CD14-positive monocyte (primary cell): ENCODE measurements at regions of chr10 and their contacts with region 1.

Region 1: GRCh38 chr10:17023386-17024298 is 106.0 kb downstream of the CUBN start:
- DNase-seq: peak; percentile 95 to 99 (median 98)
- H3K4me3 ChIP-seq: peak overlapping the region in 1 of 3 experiments; percentile 41
- H3K4me3 Mint-ChIP-seq: peak overlapping the region; percentile 25 to 79
- H3K27ac ChIP-seq: peak overlapping the region; percentile 87 to 97
- H3K27ac Mint-ChIP-seq: peak overlapping the region; percentile 96 to 99 (median 98)
- H3K4me1 ChIP-seq: peaks cover 59 to 68% of the 10 kb centered on the region in 2 donors
- H3K4me1 Mint-ChIP-seq: peaks cover 58% of the 10 kb centered on the region
- H3K27me3 ChIP-seq: no peaks in the 10 kb centered on the region
- H3K27me3 Mint-ChIP-seq: peaks cover 0 to 2% (median 0%) of the 10 kb centered on the region in 3 donors
- CTCF ChIP-seq: no peak

Region 2: GRCh38 chr10:16915300-16915699 is 108.3 kb before region 1 on chr10:
- intact Hi-C with region 1: loop called in 1 of 2 experiments (anchors 10 kb)
- DNase-seq: peak; percentile 13 to 49 (median 29)
- H3K4me3 ChIP-seq: no peak overlapping the region
- H3K4me3 Mint-ChIP-seq: no peak overlapping the region
- H3K27ac ChIP-seq: no peak overlapping the region
- H3K27ac Mint-ChIP-seq: peak overlapping the region in 2 of 7 donors; percentile 5 to 33
- H3K4me1 ChIP-seq: peaks cover 10 to 11% of the 10 kb centered on the region in 2 donors
- H3K4me1 Mint-ChIP-seq: peaks cover 14% of the 10 kb centered on the region
- H3K27me3 ChIP-seq: no peaks in the 10 kb centered on the region
- H3K27me3 Mint-ChIP-seq: peaks cover 0 to 2% (median 0%) of the 10 kb centered on the region in 3 donors
- CTCF ChIP-seq: no peak

Region 3: GRCh38 chr10:16965740-16966447 is 57.7 kb before region 1 on chr10:
- intact Hi-C with region 1: loop called in 1 of 2 experiments (anchors 5 kb)
- DNase-seq: no peak
- H3K4me3 ChIP-seq: no peak overlapping the region
- H3K4me3 Mint-ChIP-seq: peak overlapping the region in 1 of 2 donors; percentile 59
- H3K27ac ChIP-seq: no peak overlapping the region
- H3K27ac Mint-ChIP-seq: peak overlapping the region in 4 of 7 donors; percentile 69 to 85 (median 78)
- H3K4me1 ChIP-seq: peaks cover 29% of the 10 kb centered on the region in 2 donors
- H3K4me1 Mint-ChIP-seq: peaks cover 28% of the 10 kb centered on the region
- H3K27me3 ChIP-seq: peaks cover 22 to 29% of the 10 kb centered on the region in 2 donors
- H3K27me3 Mint-ChIP-seq: peaks cover 18 to 37% (median 33%) of the 10 kb centered on the region in 3 donors
- CTCF ChIP-seq: no peak

Region 4: GRCh38 chr10:17075533-17076359 is 52.1 kb after region 1 on chr10:
- intact Hi-C with region 1: loop called in 1 of 2 experiments (anchors 2 kb)
- DNase-seq: peak; percentile 83 to 96 (median 93)
- H3K4me3 ChIP-seq: no peak overlapping the region
- H3K4me3 Mint-ChIP-seq: peak overlapping the region in 1 of 2 donors; percentile 35
- H3K27ac ChIP-seq: peak overlapping the region; percentile 72 to 88
- H3K27ac Mint-ChIP-seq: peak overlapping the region; percentile 91 to 99 (median 97)
- H3K4me1 ChIP-seq: peaks cover 20 to 32% of the 10 kb centered on the region in 2 donors
- H3K4me1 Mint-ChIP-seq: peaks cover 44% of the 10 kb centered on the region
- H3K27me3 ChIP-seq: no peaks in the 10 kb centered on the region
- H3K27me3 Mint-ChIP-seq: peaks cover 0 to 6% (median 2%) of the 10 kb centered on the region in 3 donors
- CTCF ChIP-seq: no peak

Region 5: DNA sequence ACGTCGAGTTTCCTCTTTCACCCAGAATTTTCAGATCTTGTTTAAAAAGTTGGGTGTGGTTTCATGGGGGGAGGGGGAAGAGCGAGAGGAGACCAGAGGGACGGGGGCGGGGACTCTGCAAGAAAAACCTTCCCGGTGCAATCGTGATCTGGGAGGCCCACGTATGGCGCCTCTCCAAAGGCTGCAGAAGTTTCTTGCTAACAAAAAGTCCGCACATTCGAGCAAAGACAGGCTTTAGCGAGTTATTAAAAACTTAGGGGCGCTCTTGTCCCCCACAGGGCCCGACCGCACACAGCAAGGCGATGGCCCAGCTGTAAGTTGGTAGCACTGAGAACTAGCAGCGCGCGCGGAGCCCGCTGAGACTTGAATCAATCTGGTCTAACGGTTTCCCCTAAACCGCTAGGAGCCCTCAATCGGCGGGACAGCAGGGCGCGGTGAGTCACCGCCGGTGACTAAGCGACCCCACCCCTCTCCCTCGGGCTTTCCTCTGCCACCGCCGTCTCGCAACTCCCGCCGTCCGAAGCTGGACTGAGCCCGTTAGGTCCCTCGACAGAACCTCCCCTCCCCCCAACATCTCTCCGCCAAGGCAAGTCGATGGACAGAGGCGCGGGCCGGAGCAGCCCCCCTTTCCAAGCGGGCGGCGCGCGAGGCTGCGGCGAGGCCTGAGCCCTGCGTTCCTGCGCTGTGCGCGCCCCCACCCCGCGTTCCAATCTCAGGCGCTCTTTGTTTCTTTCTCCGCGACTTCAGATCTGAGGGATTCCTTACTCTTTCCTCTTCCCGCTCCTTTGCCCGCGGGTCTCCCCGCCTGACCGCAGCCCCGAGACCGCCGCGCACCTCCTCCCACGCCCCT is 204.7 kb after region 1 on chr10 and contains the start of gene VIM:
- intact Hi-C with region 1: loop called (anchors 2 kb)
- DNase-seq: peak; percentile 98 to 100 (median 98)
- H3K4me3 ChIP-seq: peak within 1 kb of the TSS; percentile 77 to 100 (median 97)
- H3K4me3 Mint-ChIP-seq: peak within 1 kb of the TSS; percentile 96 to 99
- H3K27ac ChIP-seq: peak within 1 kb of the TSS; percentile 98 to 100
- H3K27ac Mint-ChIP-seq: peak within 1 kb of the TSS; percentile 99 to 100 (median 99)
- H3K4me1 ChIP-seq: peaks cover 40 to 54% of the 10 kb centered on the region in 2 donors
- H3K4me1 Mint-ChIP-seq: peaks cover 47% of the 10 kb centered on the region
- H3K27me3 ChIP-seq: no peaks in the 10 kb centered on the region
- H3K27me3 Mint-ChIP-seq: peaks cover 0 to 16% (median 2%) of the 10 kb centered on the region in 3 donors
- CTCF ChIP-seq: no peak
- polyA plus RNA-seq, gene VIM: 697 to 4,055 (median 932) TPM

Region 6: GRCh38 chr10:17435187-17435586 is 411.5 kb after region 1 on chr10:
- intact Hi-C with region 1: no loop called
- DNase-seq: no peak
- H3K4me3 ChIP-seq: no peak overlapping the region
- H3K4me3 Mint-ChIP-seq: no peak overlapping the region
- H3K27ac ChIP-seq: no peak overlapping the region
- H3K27ac Mint-ChIP-seq: no peak overlapping the region
- H3K4me1 ChIP-seq: peaks cover 8 to 17% of the 10 kb centered on the region in 2 donors
- H3K4me1 Mint-ChIP-seq: peaks cover 30% of the 10 kb centered on the region
- H3K27me3 ChIP-seq: peaks cover 0 to 2% of the 10 kb centered on the region in 2 donors
- H3K27me3 Mint-ChIP-seq: peaks cover 3 to 4% (median 3%) of the 10 kb centered on the region in 3 donors
- CTCF ChIP-seq: no peak